CD8-positive, alpha-beta T cell (primary cell): ENCODE measurements at regions of chr5 and their contacts with region 1.

Region 1: DNA sequence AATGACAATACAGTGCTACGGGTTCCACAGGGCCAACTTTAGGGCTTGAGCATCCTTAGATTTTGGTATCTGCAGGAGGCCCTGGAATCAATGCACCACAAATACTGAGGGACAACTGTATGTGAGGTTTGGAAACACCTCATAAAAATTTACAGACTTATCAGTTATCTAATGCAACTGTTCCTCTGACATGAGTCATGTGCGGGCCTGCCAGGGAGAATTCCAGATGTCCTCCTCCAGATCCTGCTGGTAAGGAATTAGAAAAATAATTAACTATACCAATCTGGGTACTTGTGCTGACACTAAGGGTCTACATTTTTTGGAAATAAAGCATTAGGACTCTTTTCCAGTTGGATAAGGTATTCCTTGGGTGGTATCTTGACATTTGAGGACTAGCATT is 333.3 kb downstream of the ARRDC3 start:
- DNase-seq: no peak
- ATAC-seq: no peak
- H3K4me3 ChIP-seq: no peak overlapping the region
- H3K4me3 Mint-ChIP-seq: no peak overlapping the region
- H3K27ac ChIP-seq: no peak overlapping the region
- H3K27ac Mint-ChIP-seq: no peak overlapping the region
- H3K4me1 ChIP-seq: no peaks in the 10 kb centered on the region
- H3K4me1 Mint-ChIP-seq: no peaks in the 10 kb centered on the region
- H3K27me3 ChIP-seq: no peaks in the 10 kb centered on the region
- H3K27me3 Mint-ChIP-seq: peaks cover 4% of the 10 kb centered on the region
- CTCF ChIP-seq: no peak

Region 2: GRCh38 chr5:90987726-90988125 is 62.1 kb before region 1 on chr5:
- CTCF ChIA-PET with region 1: no interaction called
- POLR2A ChIA-PET with region 1: no interaction called
- intact Hi-C with region 1: loop called in 1 of 2 experiments (anchors 2 kb)
- DNase-seq: no peak
- ATAC-seq: no peak
- H3K4me3 ChIP-seq: no peak overlapping the region
- H3K4me3 Mint-ChIP-seq: no peak overlapping the region
- H3K27ac ChIP-seq: no peak overlapping the region
- H3K27ac Mint-ChIP-seq: no peak overlapping the region
- H3K4me1 ChIP-seq: no peaks in the 10 kb centered on the region
- H3K4me1 Mint-ChIP-seq: no peaks in the 10 kb centered on the region
- H3K27me3 ChIP-seq: no peaks in the 10 kb centered on the region
- H3K27me3 Mint-ChIP-seq: no peaks in the 10 kb centered on the region
- CTCF ChIP-seq: no peak